Astrocyte of the cerebellum (primary cell): ENCODE measurements at regions of chr16 and their contacts with region 1.

Region 1: GRCh38 chr16:1688807-1689563 is 10.9 kb downstream of the JPT2 start:
- DNase-seq: peak; percentile 68
- H3K4me3 ChIP-seq: no peak overlapping the region
- CTCF ChIP-seq: no peak

Region 2: GRCh38 chr16:1745181-1745899 is 56.4 kb after region 1 on chr16:
- in situ Hi-C with region 1: loop called (anchors 10 kb)
- DNase-seq: peak; percentile 78
- H3K4me3 ChIP-seq: peak overlapping the region; percentile 21
- CTCF ChIP-seq: no peak